ENCODE measurements at regions of chr4 and their contacts with region 1.

Region 1: GRCh38 chr4:80322716-80323115 is 12.8 kb upstream of the CFAP299 start:
- H3K4me3 ChIP-seq: no peak overlapping the region
- H3K27ac ChIP-seq: no peak overlapping the region
- H3K4me1 ChIP-seq: no peaks in the 10 kb centered on the region
- CTCF ChIP-seq: peak; percentile 38; the same call in 1 of the 2 replicates

Region 2: DNA sequence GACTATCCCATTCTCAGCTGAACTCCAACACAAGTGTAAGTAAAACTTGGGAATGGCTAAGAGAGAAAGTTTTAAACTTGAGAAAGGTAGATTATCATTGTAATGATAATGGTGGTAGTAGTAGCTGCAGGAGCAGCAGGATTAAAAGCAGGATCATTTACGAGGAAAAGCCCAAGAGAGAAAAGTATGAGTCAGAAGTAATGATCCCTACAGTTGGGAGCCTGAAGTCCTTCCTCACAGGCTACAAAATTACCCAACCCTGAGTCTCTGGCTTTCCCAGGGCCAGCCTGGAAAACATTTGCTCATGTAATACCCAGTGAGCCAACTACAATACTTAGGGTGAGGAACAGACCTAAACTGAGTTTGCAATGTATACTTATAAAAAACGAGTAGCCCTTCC is 129.8 kb before region 1 on chr4:
- CTCF ChIA-PET with region 1: no interaction called
- POLR2A ChIA-PET with region 1: no interaction called
- H3K4me3 ChIP-seq: no peak overlapping the region
- H3K27ac ChIP-seq: no peak overlapping the region
- H3K4me1 ChIP-seq: peaks cover 4% of the 10 kb centered on the region; the same call in 1 of the 2 replicates
- CTCF ChIP-seq: no peak

Region 3: GRCh38 chr4:80221161-80221560 is 101.6 kb before region 1 on chr4:
- CTCF ChIA-PET with region 1: interaction called, 12 read pairs
- POLR2A ChIA-PET with region 1: no interaction called
- H3K4me3 ChIP-seq: no peak overlapping the region
- H3K27ac ChIP-seq: no peak overlapping the region
- H3K4me1 ChIP-seq: no peaks in the 10 kb centered on the region
- CTCF ChIP-seq: no peak

Region 4: GRCh38 chr4:80335554-80336358 is 13.0 kb after region 1 on chr4 and contains the start of gene CFAP299:
- CTCF ChIA-PET with region 1: interaction called, 12 read pairs
- POLR2A ChIA-PET with region 1: no interaction called
- H3K4me3 ChIP-seq: peak within 1 kb of the TSS; percentile 61
- H3K27ac ChIP-seq: no peak within 1 kb of the TSS
- H3K4me1 ChIP-seq: no peaks in the 10 kb centered on the region
- CTCF ChIP-seq: peak; percentile 88

Region 5: DNA sequence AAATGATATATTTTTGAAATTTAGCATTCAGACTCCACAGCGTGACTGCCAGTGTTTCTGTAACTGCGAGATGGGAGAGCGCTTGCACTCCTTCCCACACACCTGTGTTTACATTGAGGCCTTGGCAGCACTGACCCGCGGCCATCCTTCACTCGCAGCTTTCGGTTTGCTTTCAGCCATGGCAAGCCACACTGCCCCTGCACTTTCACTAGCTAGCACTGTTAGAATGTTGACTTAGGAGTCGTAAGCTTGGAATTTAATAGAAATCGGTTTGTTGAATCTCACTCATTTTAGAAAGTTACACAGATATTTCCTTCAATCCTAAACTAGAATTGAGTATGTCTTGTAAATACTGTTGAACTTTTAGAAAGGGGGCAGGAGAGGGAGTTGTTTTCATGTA is 149.0 kb after region 1 on chr4:
- CTCF ChIA-PET with region 1: no interaction called
- POLR2A ChIA-PET with region 1: no interaction called
- H3K4me3 ChIP-seq: no peak overlapping the region; the same call in 1 of the 2 replicates
- H3K27ac ChIP-seq: no peak overlapping the region
- H3K4me1 ChIP-seq: no peaks in the 10 kb centered on the region
- CTCF ChIP-seq: no peak

Measured in HEK293 (cell line).